ENCODE measurements at regions of chr6 and their contacts with region 1.

Region 1: GRCh38 chr6:170039156-170040107 is 251.4 kb downstream of the DLL1 start:
- DNase-seq: no peak
- ATAC-seq: no peak
- H3K4me3 ChIP-seq: no peak overlapping the region
- H3K27ac ChIP-seq: no peak overlapping the region
- H3K4me1 ChIP-seq: peaks cover 0 to 28% (median 11%) of the 10 kb centered on the region in 9 donors
- H3K27me3 ChIP-seq: no peaks in the 10 kb centered on the region
- CTCF ChIP-seq: no peak

Region 2: DNA sequence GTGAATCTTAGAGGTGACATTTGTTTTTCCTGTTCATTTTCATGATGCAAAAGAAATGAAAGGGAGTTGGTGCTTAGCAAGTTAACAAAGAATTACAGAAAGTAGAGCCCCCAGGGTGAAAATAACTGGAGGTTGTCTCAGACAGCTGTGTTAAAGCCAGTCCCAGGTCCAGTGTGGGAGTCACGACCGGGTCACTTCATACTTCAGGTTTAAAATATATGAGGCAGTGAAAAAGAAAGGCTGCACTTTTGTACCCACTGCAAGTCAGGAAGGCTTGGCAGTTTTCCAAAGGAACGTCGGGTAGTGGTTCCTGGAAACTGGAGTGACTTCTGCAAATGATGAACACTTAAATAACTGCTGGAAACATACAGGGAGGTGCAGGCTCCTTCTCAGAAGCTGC is 694.3 kb before region 1 on chr6:
- intact Hi-C with region 1: no loop called
- DNase-seq: peak in 1 of 2 donors; percentile 13
- ATAC-seq: no peak
- H3K4me3 ChIP-seq: no peak overlapping the region
- H3K27ac ChIP-seq: peak overlapping the region in 1 of 10 donors; percentile 7
- H3K4me1 ChIP-seq: no peaks in the 10 kb centered on the region
- H3K27me3 ChIP-seq: peaks cover 0 to 5% (median 0%) of the 10 kb centered on the region in 7 donors
- CTCF ChIP-seq: no peak

Region 3: DNA sequence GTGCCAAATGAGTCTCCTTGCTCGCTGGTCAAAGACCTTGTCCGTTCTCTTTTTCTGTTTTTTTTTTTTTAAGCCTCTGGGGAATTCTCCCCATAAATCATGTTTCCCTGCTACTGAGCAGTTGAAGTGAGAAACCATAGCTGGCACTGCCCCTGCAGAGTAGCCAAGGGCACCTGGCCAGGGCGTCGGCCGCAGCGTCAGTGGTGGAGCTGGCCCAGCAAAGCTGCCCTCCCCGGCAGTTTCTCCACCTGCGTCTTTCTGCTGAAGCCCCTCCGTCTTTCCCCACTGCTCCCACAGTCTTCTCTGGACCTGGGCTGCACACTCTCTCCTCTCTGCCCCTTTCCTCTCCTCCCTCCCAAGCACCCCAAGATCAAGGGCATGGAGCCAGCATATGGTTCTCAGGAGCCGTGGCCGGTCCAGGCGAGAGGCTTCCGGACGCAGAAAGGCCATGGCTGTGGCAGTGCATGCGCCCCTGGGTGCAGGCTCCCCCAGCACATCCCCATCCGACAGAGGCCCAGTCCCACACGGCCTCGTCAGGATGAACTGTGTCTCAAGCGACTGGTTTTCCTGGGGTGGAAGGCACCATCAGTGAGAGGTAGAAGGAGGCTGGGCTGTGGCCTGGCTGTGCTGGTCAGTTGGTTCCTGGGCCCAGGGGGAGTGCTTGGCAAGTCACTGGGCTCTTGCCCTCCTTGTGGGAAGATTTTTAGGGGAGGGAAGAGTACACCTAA is 69.9 kb before region 1 on chr6:
- intact Hi-C with region 1: loop called in 1 of 10 experiments (anchors 5 kb)
- DNase-seq: peak in 1 of 2 donors; percentile 9
- ATAC-seq: no peak
- H3K4me3 ChIP-seq: no peak overlapping the region
- H3K27ac ChIP-seq: no peak overlapping the region
- H3K4me1 ChIP-seq: no peaks in the 10 kb centered on the region
- H3K27me3 ChIP-seq: no peaks in the 10 kb centered on the region
- CTCF ChIP-seq: no peak

Region 4: GRCh38 chr6:170011204-170012036 is 28.0 kb before region 1 on chr6:
- intact Hi-C with region 1: loop called in 1 of 10 experiments (anchors 1 kb)
- DNase-seq: peak; percentile 69 to 81
- ATAC-seq: peak; percentile 74 to 98 (median 92)
- H3K4me3 ChIP-seq: no peak overlapping the region
- H3K27ac ChIP-seq: peak overlapping the region; percentile 0 to 82 (median 61)
- H3K4me1 ChIP-seq: peaks cover 6 to 19% (median 15%) of the 10 kb centered on the region in 9 donors
- H3K27me3 ChIP-seq: peaks cover 0 to 7% (median 0%) of the 10 kb centered on the region in 7 donors
- CTCF ChIP-seq: peak in 1 of 9 donors; percentile 20

Region 5: DNA sequence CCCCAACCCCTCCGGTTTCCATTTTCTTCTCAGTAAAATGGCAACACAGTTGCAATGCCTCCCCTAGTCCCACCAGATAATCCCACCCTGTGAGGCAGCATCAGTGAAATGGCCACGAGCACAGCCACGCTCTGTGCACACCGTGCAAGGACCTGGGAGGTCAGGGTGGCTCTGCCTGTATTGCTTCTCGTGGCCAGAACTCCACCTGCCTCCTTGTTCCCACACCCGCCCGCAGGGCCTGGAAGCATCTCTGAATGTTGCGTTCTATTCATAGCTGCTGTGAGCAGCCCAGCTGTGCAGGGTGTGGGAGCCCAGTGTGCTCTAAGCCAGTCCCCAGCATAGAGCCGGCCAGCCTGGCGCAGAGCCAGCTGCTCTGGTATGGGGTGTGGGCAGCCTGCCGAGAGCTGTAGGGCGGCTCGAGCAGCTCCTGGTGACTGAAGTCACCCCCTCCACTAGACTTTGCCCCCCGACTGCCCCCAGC is 90.3 kb after region 1 on chr6:
- intact Hi-C with region 1: loop called in 5 of 10 experiments (anchors 5 to 10 kb)
- DNase-seq: peak; percentile 75 to 80
- ATAC-seq: peak; percentile 80 to 94 (median 88)
- H3K4me3 ChIP-seq: no peak overlapping the region
- H3K27ac ChIP-seq: peak overlapping the region in 6 of 10 donors; percentile 44 to 77 (median 64)
- H3K4me1 ChIP-seq: peaks cover 6 to 50% (median 29%) of the 10 kb centered on the region in 9 donors
- H3K27me3 ChIP-seq: no peaks in the 10 kb centered on the region
- CTCF ChIP-seq: no peak

Region 6: DNA sequence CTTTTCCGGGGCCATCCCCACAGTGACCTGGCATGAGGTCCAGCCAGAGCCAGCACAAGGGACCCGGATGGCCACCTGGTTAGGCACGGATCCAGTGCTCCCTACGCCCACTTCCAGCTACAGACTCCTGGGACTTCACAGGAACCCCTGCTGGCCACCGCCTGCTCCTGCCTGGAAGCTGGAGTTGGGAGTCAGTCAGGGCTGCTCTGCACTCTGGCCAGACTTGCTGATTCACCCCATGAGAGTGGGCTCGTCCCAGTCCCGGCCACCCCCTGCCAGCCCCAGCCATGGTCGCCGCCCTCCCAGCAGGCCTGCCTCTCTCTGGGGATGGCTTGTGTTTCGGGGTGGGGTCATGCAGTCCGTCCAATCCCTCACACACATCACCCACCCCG is 125.6 kb after region 1 on chr6:
- intact Hi-C with region 1: loop called in 1 of 10 experiments (anchors 1 kb)
- DNase-seq: peak; percentile 58 to 69
- ATAC-seq: peak; percentile 52 to 86 (median 78)
- H3K4me3 ChIP-seq: no peak overlapping the region
- H3K27ac ChIP-seq: peak overlapping the region in 8 of 10 donors; percentile 35 to 78 (median 62)
- H3K4me1 ChIP-seq: peaks cover 10 to 34% (median 27%) of the 10 kb centered on the region in 9 donors
- H3K27me3 ChIP-seq: peaks cover 0 to 14% (median 0%) of the 10 kb centered on the region in 7 donors
- CTCF ChIP-seq: peak in 7 of 9 donors; percentile 14 to 50 (median 44)

Region 7: GRCh38 chr6:170286246-170286933 is 247.0 kb after region 1 on chr6:
- intact Hi-C with region 1: loop called in 4 of 10 experiments (anchors 2 to 5 kb)
- DNase-seq: peak; percentile 54 to 73
- ATAC-seq: peak in 7 of 8 donors; percentile 0 to 35 (median 16)
- H3K4me3 ChIP-seq: peak overlapping the region in 4 of 10 donors; percentile 6 to 85 (median 72)
- H3K27ac ChIP-seq: peak overlapping the region in 8 of 10 donors; percentile 47 to 91 (median 73)
- H3K4me1 ChIP-seq: peaks cover 7 to 51% (median 48%) of the 10 kb centered on the region in 9 donors
- H3K27me3 ChIP-seq: peaks cover 0 to 64% (median 5%) of the 10 kb centered on the region in 7 donors
- CTCF ChIP-seq: no peak

Measured in heart right ventricle (tissue), 16 donors.